BJ (cell line): ENCODE measurements at regions of chr7 and their contacts with region 1.

Region 1: GRCh38 chr7:138875794-138876193 is 77.8 kb upstream of the ATP6V0A4 start:
- DNase-seq: peak; percentile 74
- H3K4me3 ChIP-seq: no peak overlapping the region
- H3K27me3 ChIP-seq: no peaks in the 10 kb centered on the region
- CTCF ChIP-seq: no peak

Region 2: GRCh38 chr7:138886501-138886917 is 10.7 kb after region 1 on chr7:
- CTCF ChIA-PET with region 1: interaction called, 30 read pairs
- POLR2A ChIA-PET with region 1: interaction called, 4 read pairs
- DNase-seq: no peak
- H3K4me3 ChIP-seq: no peak overlapping the region
- H3K27me3 ChIP-seq: no peaks in the 10 kb centered on the region
- CTCF ChIP-seq: peak; percentile 60

Region 3: GRCh38 chr7:138919216-138919615 is 43.4 kb after region 1 on chr7:
- CTCF ChIA-PET with region 1: no interaction called
- POLR2A ChIA-PET with region 1: no interaction called
- DNase-seq: no peak
- H3K4me3 ChIP-seq: no peak overlapping the region
- H3K27me3 ChIP-seq: no peaks in the 10 kb centered on the region
- CTCF ChIP-seq: no peak

Region 4: DNA sequence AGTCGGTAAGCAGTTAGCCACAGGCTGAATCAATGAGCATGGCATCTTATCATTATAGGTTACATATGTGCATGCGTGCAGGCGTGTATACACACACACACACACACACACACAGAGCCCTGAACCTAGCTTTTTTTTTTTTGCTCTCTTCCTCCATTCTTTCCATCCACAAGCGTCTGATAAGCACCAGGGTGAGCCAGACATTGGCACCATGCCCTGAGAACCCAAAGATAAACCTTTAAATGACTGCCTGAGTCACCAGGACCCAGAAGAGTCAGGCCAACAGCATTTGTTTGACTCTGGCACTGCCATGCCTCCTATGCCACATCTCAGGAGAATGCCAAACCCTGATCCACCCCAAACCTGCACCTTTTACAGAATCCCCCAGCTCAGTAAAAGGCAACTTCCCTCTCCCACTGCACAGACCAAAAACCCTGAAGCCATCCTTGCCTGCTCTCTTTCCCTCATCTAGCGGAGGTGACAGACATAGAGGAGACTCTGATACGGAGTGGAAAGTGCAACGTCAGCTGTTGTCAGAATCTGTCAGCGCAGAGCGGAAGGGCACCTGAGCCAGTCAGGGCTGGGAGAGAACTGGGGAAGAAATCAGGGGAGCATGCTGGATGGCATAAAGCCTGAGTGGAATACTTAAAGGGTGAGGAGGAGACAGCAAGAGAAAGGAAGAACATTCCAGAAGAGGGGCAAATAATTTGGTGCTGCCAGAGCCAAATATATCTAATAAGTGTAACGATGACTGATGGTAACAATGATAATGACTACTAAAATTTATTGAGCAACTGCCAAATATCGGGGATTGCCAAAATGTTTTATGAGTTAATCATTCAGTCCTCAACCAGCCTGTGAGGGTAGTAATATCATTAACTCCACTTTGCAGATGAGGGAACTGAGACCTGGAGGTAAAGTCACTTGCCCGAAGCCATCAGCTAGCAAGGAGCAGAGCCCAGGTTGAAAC is 1183.8 kb after region 1 on chr7:
- CTCF ChIA-PET with region 1: no interaction called
- POLR2A ChIA-PET with region 1: interaction called, 25 read pairs
- DNase-seq: no peak
- H3K4me3 ChIP-seq: no peak overlapping the region
- H3K27me3 ChIP-seq: no peaks in the 10 kb centered on the region
- CTCF ChIP-seq: no peak